H1 (cell line): ENCODE measurements at regions of chr3 and their contacts with region 1.

Region 1: DNA sequence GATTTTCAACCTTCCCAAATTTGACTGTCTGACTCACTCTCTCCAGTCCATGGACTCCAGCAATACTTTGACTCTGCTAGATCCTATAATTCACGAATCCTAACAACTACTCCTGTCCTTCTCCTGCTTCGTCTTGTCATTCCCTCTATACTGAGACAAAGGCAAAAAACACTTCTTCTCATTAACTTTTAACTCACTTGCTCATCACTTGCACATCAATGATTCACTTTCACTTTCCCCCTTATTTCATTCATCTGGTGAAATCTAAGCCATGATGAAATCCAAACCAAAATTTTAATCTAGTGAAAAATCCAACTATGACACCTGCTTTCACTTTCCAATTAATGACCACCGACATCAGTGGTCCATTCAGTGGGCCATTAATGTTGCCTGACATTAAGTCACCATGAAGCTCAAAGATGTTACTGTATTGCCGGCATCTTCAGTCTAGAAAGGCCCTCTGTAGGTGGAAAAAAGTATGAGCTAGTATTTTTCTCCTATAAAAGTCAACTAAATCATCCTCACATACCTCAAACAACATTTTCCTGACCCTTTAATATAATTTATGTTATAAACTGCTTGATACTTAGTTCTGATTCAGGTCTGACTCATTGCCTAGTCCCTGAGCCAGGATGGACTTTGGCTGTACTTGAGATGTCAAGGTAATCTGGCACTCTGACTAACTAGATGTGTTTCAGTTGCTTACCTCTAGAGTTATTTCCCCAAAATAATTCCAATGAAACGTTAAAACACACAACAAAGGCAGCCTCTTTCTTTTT is 158.6 kb downstream of the CNTN6 start:
- DNase-seq: no peak
- H3K4me3 ChIP-seq: no peak overlapping the region
- H3K27ac ChIP-seq: no peak overlapping the region
- H3K4me1 ChIP-seq: no peaks in the 10 kb centered on the region
- H3K27me3 ChIP-seq: no peaks in the 10 kb centered on the region
- CTCF ChIP-seq: peak in 1 of 3 experiments; percentile 18; a peak in 1 of 4 replicates
- EP300 ChIP-seq: no peak
- POLR2A ChIP-seq: no peak
- RAD21 ChIP-seq: peak; percentile 24 to 25; a peak in 1 of 4 replicates

Region 2: GRCh38 chr3:1216801-1217200 is 34.7 kb before region 1 on chr3:
- CTCF ChIA-PET with region 1: interaction called, 10 read pairs
- POLR2A ChIA-PET with region 1: no interaction called
- DNase-seq: no peak
- H3K4me3 ChIP-seq: no peak overlapping the region
- H3K27ac ChIP-seq: no peak overlapping the region
- H3K4me1 ChIP-seq: no peaks in the 10 kb centered on the region
- H3K27me3 ChIP-seq: no peaks in the 10 kb centered on the region
- CTCF ChIP-seq: no peak
- EP300 ChIP-seq: no peak
- POLR2A ChIP-seq: no peak
- RAD21 ChIP-seq: no peak